ENCODE measurements at regions of chr3 and their contacts with region 1.

Region 1: DNA sequence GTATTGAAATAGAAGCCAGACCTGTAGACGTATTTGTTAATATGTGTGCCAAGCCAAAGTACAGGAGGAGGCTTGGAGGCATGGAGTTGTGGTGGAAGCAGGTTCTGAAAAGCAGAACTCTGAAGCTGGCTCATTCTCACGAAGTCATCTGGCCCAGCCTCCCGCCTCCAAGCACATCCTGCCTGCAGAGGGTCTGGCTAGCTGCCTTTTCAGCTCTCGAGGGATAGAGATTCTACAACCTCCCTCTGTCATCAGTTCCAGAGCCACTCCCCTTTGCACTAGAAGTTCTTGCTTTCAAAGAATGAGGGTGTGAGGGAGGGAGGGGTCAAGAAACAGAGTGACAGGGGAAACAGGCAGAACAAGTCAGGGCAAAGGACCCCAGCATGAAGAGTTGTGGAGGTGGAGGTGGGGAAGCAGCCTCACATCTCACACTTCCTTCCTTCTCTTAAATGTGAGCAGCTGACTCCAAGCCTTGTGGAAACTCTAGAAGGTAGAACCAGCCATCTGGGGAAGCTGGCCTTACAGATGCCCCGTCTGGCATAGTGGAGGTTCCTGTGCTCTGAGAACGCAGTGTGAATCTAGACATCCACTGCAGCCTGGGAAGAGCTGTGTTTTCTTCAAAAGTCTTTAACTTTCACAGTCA is 95.3 kb downstream of the SLC49A4 start:
- DNase-seq: peak; percentile 80
- H3K4me3 Mint-ChIP-seq: no peak overlapping the region
- H3K27ac Mint-ChIP-seq: no peak overlapping the region
- H3K4me1 Mint-ChIP-seq: peaks cover 40% of the 10 kb centered on the region
- H3K27me3 Mint-ChIP-seq: no peaks in the 10 kb centered on the region
- CTCF ChIP-seq: no peak

Region 2: DNA sequence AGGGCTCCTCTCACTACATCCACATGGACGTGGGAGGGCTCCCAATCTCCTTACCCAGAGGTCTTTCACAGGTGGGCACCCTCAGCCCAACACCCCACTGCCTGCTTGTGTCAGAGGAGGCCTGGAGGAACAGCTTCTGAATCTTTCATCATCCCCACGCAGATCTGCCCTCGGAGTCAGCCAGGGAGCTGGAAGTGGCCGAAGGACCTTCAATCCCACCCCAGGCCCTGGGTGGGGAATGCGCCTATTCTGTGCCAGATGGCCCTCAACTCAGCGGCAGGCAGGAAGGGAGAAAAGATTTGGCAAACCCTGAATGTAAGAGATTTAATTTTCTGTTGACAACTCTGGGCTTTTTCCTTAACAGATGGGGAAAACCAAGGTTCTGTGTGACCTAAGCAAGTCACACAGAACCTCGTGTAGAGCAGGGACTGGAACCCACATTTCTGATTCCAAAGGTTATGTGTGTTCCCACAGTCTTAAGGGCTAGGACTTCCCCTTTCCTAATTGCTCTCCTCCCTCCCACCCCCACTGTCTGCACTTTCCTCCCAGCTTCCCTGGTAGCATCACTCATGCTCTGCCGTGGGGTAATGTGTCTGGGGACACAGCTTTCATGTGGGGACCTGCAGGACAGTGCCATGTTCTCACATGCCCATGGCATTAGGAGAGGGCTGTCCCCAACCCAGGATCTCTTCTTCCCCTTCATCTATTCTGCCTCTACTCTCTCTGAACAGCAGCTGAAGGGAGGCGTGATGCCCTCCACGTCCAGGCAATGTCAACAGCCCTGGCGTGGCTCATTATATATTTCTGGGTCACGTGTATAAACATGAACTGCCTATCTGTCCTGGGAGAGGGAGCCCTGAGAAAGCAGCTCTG is 39.2 kb after region 1 on chr3:
- CTCF ChIA-PET with region 1: no interaction called
- POLR2A ChIA-PET with region 1: interaction called, 10 read pairs
- intact Hi-C with region 1: loop called (anchors 5 kb)
- DNase-seq: no peak
- H3K4me3 Mint-ChIP-seq: no peak overlapping the region
- H3K27ac Mint-ChIP-seq: no peak overlapping the region
- H3K4me1 Mint-ChIP-seq: peaks cover 34% of the 10 kb centered on the region
- H3K27me3 Mint-ChIP-seq: no peaks in the 10 kb centered on the region
- CTCF ChIP-seq: no peak